ENCODE measurements at regions of chr14 and their contacts with region 1.

Region 1: DNA sequence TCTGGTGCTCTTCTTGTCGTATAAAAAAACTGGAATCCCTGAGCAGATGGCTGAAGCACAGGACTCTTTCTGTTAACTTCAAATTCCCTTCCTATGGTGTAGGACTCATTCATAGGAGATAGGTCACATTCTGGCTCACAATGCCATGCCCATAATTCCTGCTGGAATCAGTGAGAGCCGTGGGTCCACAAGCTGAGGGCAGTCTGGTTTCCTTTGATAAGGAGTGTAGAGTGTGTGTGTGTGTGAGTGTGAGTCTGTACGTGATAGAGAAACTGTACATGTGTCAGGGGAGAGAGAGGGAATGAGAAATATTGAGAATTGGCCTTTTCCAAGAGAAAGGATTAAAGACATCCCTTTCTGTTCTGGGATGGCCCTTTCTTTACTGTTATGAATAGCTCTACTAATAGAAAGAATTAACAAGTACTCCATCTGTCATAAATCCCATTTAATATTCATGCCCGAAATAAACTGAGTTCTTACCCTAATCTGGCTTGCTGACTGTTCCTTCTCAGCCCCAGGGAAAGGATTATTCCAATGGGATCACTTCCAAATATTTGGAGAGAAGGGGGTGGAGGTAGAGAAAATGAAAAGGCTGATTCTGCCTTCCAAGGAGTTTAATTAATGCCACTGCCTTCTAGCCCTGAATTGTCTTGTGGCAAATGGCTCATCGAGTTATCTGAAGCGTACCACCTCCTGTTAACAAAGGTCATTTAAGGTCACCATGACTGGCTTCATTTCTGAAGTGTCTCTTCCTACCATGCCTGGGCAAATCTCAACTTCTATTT is 79.0 kb downstream of the TMX1 start:
- DNase-seq: no peak
- ATAC-seq: no peak

Region 2: DNA sequence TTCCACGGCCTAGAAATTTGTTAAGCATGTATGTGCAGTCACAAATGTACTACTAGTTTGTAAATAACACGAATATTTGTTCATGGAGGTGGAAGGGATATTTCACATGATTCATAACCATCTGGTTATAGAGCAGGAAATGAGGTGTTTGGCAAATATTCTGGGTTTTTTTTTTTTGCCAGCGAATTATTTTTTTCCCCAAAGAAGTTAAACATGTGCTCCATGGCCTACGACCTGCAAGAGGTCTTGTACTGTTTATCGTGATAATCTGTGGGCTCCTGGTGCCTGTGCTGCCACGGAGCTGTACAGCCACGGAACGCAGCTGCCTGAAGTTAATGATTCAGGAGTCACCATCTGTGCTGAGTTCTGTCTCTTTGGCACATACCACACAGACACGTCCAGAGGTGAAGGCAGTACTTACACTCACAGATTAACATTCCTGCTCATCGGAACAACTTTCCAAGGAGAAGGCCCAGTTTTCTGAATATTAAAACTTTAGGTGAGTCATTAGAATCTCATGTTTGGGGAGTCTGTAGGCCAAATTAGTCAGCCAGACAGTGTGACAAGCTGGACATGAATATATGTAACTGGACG is 77.3 kb after region 1 on chr14:
- intact Hi-C with region 1: loop called (anchors 2 kb)
- DNase-seq: no peak
- ATAC-seq: peak; percentile 64

Region 3: GRCh38 chr14:51511265-51511664 is 192.3 kb after region 1 on chr14:
- intact Hi-C with region 1: loop called (anchors 2 kb)
- DNase-seq: no peak
- ATAC-seq: no peak

Measured in sciatic nerve (tissue), 2 donors.